HepG2 (cell line): ENCODE measurements at regions of chr5 and their contacts with region 1.

Region 1: DNA sequence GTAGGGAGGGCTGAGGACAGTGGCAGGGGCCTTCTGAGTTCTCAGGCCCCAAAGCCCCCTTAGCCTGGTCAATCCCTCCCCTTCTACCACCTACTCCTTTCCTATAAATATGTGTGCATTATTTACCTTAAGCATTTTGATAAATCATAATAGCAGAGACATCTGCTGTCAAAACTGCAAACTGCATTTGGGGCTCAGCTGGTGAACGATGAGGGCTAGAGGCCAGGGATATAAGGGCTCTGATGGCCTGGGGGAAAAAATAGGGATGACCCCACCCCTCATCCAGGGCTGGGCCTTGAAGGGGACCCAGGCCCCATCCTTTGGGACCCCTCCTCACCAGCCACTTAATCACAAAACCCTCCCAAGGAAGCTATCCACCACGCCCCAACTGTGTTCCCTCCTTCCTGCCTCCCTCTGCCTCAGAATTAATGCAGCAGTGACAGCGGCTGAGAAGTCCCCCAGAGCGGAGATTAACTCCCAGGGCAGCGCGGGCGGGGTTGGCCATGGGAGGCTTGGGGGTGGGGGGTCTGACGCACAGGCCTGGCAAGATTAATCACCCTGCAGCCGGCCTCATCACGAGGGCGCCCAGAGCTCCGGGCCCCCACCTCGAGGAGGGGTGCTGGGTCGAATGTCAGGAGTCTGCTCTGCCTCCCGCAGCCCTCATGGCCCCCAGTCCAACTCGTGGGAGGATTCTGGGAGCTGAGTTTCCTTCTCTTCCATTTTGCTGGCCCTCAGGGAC is 42.1 kb downstream of the CXXC5 start:
- DNase-seq: no peak
- ATAC-seq: peak; percentile 10
- H3K4me3 ChIP-seq: peak overlapping the region in 1 of 3 experiments; percentile 46; a peak in 1 of 6 replicates
- H3K27ac ChIP-seq: no peak overlapping the region
- H3K4me1 ChIP-seq: peaks cover 82% of the 10 kb centered on the region
- H3K27me3 ChIP-seq: no peaks in the 10 kb centered on the region
- CTCF ChIP-seq: peak; percentile 63
- EP300 ChIP-seq: no peak
- POLR2A ChIP-seq: no peak
- RAD21 ChIP-seq: no peak

Region 2: GRCh38 chr5:139670369-139671095 is 19.7 kb before region 1 on chr5:
- CTCF ChIA-PET with region 1: no interaction called
- POLR2A ChIA-PET with region 1: no interaction called
- in situ Hi-C with region 1: no loop called
- intact Hi-C with region 1: loop called (anchors 2 kb)
- DNase-seq: peak; percentile 45
- ATAC-seq: peak; percentile 58
- H3K4me3 ChIP-seq: peak overlapping the region in 1 of 3 experiments; percentile 47; a peak in 3 of 6 replicates
- H3K27ac ChIP-seq: peak overlapping the region; percentile 56
- H3K4me1 ChIP-seq: peaks cover 66% of the 10 kb centered on the region
- H3K27me3 ChIP-seq: no peaks in the 10 kb centered on the region
- CTCF ChIP-seq: peak; percentile 67
- EP300 ChIP-seq: no peak
- POLR2A ChIP-seq: no peak
- RAD21 ChIP-seq: no peak

Region 3: DNA sequence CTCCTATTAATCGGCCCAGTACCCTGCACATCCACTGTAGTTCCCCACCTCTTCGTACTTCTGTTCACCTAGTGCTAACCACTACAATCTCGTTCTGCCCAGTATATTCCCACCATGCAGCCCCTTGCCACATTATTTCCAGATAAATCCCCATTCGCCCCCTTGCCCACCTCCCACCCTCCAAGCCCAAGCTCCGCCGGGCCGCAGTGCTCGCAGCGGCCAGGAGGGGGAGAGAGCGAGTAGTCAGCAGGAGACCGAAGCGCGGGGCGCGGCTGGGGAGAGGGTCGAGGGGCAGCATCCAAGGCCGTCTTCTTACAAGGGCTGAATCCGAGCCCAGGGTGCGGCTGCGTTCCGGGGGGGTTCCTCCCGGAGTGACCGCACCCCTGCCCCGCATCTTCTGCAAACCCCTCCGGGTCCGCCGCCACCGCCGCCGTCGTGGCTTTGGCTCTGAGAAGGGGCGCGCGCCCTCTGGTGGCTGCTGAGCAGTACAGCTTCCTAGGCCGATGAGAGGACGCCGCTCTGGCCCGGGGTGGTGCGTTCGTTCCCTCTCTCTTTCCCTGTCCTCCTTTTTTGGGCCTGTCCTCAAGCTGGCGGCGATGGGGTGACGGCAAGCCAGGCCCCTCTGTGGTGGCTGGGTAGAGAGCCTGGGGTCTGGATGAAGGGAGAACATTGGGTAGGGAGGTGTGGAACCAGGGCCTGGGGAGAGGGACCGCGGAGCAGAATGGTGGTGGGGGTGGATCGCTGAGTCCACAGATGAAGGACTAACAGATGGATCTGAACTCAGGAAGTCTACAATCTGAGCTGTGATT is 75.4 kb after region 1 on chr5:
- CTCF ChIA-PET with region 1: interaction called, 7 read pairs
- POLR2A ChIA-PET with region 1: no interaction called
- in situ Hi-C with region 1: no loop called
- intact Hi-C with region 1: loop called (anchors 5 kb)
- DNase-seq: peak; percentile 55
- ATAC-seq: peak; percentile 83
- H3K4me3 ChIP-seq: peak overlapping the region; percentile 62 to 78 (median 69)
- H3K27ac ChIP-seq: no peak overlapping the region
- H3K4me1 ChIP-seq: peaks cover 78% of the 10 kb centered on the region
- H3K27me3 ChIP-seq: peaks cover 0 to 13% of the 10 kb centered on the region in 2 experiments; a peak in 4 of 5 replicates
- CTCF ChIP-seq: peak; percentile 97
- EP300 ChIP-seq: no peak
- POLR2A ChIP-seq: no peak
- RAD21 ChIP-seq: peak; percentile 98